H1 (cell line): ENCODE measurements at regions of chr9 and their contacts with region 1.

Region 1: GRCh38 chr9:34500623-34501267 is 22.0 kb downstream of the ENHO start:
- DNase-seq: peak in 1 of 2 experiments; percentile 91
- H3K4me3 ChIP-seq: no peak overlapping the region
- H3K27ac ChIP-seq: no peak overlapping the region
- H3K4me1 ChIP-seq: 0 out of 7 replicates have a peak, but pooled peaks cover 0 to 3% (median 0%) of the 10 kb centered on the region in 4 experiments
- H3K27me3 ChIP-seq: no peaks in the 10 kb centered on the region; a peak in 1 of 7 replicates
- CTCF ChIP-seq: peak; percentile 90 to 97 (median 96)
- EP300 ChIP-seq: no peak
- POLR2A ChIP-seq: no peak
- RAD21 ChIP-seq: peak; percentile 92 to 93

Region 2: DNA sequence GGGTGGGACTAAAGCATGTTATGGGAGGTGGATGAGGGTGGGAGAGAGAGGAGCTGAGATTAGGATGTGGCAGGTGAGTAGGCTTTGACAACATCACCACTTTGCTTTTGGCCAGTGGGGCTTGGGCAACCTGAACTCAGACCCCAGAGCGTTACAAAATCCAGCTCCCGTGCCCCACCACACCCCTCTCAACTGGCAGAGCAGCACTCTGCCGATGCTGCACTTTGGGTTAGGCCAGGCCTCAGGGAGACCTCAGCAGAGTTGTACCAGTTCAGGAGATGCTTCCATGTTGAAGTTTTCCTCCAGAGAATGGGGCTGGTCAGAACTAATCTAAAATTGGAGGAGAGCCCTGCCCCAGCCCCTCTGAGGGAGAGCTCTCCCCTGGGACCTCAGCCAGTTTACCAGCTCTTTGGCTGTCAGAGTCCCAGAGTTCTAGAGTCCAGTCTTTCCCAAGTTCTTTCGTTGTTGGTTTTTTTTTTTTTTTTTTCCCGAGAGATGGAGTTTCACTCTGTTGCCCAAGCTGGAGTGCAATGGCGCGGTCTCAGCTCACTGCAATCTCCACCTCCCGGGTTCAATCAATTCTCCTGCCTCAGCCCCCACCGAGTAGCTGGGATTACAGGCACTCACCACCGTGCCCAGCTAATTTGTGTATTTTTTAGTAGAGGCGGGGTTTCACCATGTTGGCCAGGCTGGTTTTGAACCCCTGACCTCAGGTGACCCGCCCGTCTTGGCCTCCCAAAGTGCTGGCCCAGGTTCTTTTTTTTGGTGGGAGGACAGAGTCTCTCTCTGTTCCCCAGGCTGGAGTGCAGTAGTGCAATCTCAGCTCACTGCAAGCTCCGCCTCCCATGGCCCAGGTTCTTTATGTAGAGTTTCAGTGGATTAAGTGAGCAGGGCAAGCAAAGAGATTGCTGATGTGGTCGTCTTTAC is 153.6 kb before region 1 on chr9:
- CTCF ChIA-PET with region 1: no interaction called
- POLR2A ChIA-PET with region 1: no interaction called
- DNase-seq: no peak
- H3K4me3 ChIP-seq: no peak overlapping the region
- H3K27ac ChIP-seq: no peak overlapping the region
- H3K4me1 ChIP-seq: no peaks in the 10 kb centered on the region
- H3K27me3 ChIP-seq: no peaks in the 10 kb centered on the region
- CTCF ChIP-seq: no peak
- EP300 ChIP-seq: no peak
- POLR2A ChIP-seq: no peak
- RAD21 ChIP-seq: no peak

Region 3: DNA sequence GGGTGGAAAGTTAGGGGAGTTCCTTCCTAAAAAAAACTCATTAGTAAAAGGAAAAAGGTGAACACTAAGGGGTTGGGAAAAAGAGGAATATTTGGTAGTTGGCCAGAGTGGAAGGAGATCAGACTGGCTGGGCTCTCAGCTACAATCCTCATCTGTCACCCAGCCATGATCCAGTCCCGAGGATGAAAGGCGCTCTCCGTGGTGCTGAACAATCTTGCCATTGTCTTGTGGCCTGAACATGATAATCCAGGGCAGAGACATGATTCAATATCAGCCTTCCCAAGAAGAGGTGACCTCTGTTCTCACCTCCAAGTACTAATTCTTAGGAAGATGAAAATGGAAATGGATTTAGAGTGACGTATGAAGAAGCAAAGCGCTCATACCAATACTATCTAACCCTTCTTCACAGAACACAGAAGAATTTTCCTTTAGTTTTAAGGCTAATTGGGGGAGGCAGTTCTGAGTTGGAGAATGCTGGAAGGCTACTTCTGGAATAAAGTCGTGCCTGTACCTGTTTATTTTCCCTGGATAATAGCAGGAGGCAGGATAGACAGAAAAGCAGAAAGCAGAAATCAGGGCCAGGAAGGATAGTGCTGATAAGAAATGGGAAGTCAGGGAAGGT is 87.4 kb before region 1 on chr9:
- CTCF ChIA-PET with region 1: interaction called, 15 read pairs
- POLR2A ChIA-PET with region 1: no interaction called
- DNase-seq: peak in 1 of 2 experiments; percentile 77
- H3K4me3 ChIP-seq: no peak overlapping the region
- H3K27ac ChIP-seq: no peak overlapping the region
- H3K4me1 ChIP-seq: no peaks in the 10 kb centered on the region
- H3K27me3 ChIP-seq: no peaks in the 10 kb centered on the region; a peak in 1 of 7 replicates
- CTCF ChIP-seq: no peak
- EP300 ChIP-seq: no peak
- POLR2A ChIP-seq: no peak
- RAD21 ChIP-seq: no peak

Region 4: GRCh38 chr9:34446468-34446891 is 54.3 kb before region 1 on chr9:
- CTCF ChIA-PET with region 1: interaction called, 73 read pairs
- POLR2A ChIA-PET with region 1: no interaction called
- DNase-seq: no peak
- H3K4me3 ChIP-seq: no peak overlapping the region
- H3K27ac ChIP-seq: no peak overlapping the region
- H3K4me1 ChIP-seq: peaks cover 2 to 6% (median 5%) of the 10 kb centered on the region in 4 experiments; a peak in 4 of 7 replicates
- H3K27me3 ChIP-seq: no peaks in the 10 kb centered on the region
- CTCF ChIP-seq: no peak
- EP300 ChIP-seq: no peak
- POLR2A ChIP-seq: no peak
- RAD21 ChIP-seq: no peak

Region 5: GRCh38 chr9:34463098-34463900 is 37.4 kb before region 1 on chr9:
- CTCF ChIA-PET with region 1: interaction called, 73 read pairs
- POLR2A ChIA-PET with region 1: no interaction called
- DNase-seq: no peak
- H3K4me3 ChIP-seq: no peak overlapping the region
- H3K27ac ChIP-seq: no peak overlapping the region
- H3K4me1 ChIP-seq: peaks cover 0 to 5% (median 1%) of the 10 kb centered on the region in 4 experiments; a peak in 3 of 7 replicates
- H3K27me3 ChIP-seq: peaks cover 0 to 2% (median under 1%) of the 10 kb centered on the region in 4 experiments; a peak in 2 of 7 replicates
- CTCF ChIP-seq: no peak
- EP300 ChIP-seq: no peak
- POLR2A ChIP-seq: no peak
- RAD21 ChIP-seq: no peak

Region 6: GRCh38 chr9:34513567-34514214 is 12.9 kb after region 1 on chr9:
- CTCF ChIA-PET with region 1: interaction called, 114 read pairs
- POLR2A ChIA-PET with region 1: interaction called, 6 read pairs
- DNase-seq: peak in 1 of 2 experiments; percentile 63
- H3K4me3 ChIP-seq: peak overlapping the region in 1 of 4 experiments; percentile 37; a peak in 1 of 8 replicates
- H3K27ac ChIP-seq: 0 out of 2 replicates have a peak overlapping the region, but pooled peaks have one; percentile 66
- H3K4me1 ChIP-seq: peaks cover 16 to 33% (median 20%) of the 10 kb centered on the region in 4 experiments
- H3K27me3 ChIP-seq: no peaks in the 10 kb centered on the region; a peak in 1 of 7 replicates
- CTCF ChIP-seq: no peak
- EP300 ChIP-seq: no peak
- POLR2A ChIP-seq: no peak
- RAD21 ChIP-seq: no peak

Region 7: GRCh38 chr9:34559624-34560452 is 59.1 kb after region 1 on chr9:
- CTCF ChIA-PET with region 1: interaction called, 14 read pairs
- POLR2A ChIA-PET with region 1: no interaction called
- DNase-seq: no peak
- H3K4me3 ChIP-seq: no peak overlapping the region
- H3K27ac ChIP-seq: no peak overlapping the region
- H3K4me1 ChIP-seq: peaks cover 7 to 24% (median 16%) of the 10 kb centered on the region in 4 experiments
- H3K27me3 ChIP-seq: no peaks in the 10 kb centered on the region; a peak in 3 of 7 replicates
- CTCF ChIP-seq: no peak
- EP300 ChIP-seq: no peak
- POLR2A ChIP-seq: no peak
- RAD21 ChIP-seq: no peak